AG04450 (cell line): ENCODE measurements at regions of chr16 and their contacts with region 1.

Region 1: DNA sequence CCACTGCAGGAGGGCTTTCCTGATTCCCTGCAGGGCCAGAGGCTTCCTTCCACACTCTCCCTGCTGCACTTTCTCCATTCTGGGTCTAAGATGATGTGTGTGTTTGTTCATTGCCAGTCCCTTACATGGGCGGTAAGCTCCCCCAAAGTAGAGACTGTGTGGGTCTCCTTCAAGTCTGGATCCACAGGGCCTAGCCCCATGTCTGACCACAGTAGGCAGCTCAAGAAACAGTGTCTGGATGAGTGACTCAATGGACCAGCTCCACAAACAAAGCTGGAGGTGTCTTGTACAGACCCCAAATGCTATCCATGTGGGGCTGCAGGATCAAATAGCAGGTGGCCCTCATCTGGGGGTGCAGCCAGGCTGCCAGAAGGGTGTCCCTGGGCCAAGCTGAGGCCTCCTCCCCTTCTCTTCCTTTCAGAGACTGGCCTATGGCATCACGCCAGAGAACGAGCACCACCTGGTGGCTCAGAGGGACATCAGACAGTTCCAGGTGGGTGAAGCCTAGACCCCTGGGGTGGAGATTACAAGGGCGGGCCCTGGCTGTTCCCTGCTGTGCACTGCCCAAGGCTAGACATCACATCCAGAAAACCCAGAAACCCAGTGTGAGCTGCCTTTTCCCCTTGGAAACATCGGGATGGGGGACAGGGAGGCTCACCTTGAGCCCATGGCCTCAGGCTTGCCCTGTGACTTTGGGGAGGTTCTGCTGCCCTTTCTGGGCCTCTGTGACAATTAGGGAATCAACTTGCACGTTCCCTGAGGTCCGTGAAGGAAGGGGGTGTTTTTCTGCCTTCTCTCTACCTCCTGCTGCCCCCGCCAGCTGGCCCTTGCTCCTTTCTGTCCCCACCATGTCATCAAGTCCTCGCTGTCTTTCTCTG is 45.9 kb downstream of the SLC6A2 start:
- DNase-seq: peak; percentile 6
- H3K4me3 ChIP-seq: no peak overlapping the region
- H3K27ac ChIP-seq: no peak overlapping the region
- H3K27me3 ChIP-seq: peaks cover 9% of the 10 kb centered on the region
- CTCF ChIP-seq: peak; percentile 58

Region 2: GRCh38 chr16:55543472-55543871 is 158.2 kb before region 1 on chr16:
- CTCF ChIA-PET with region 1: interaction called, 31 read pairs
- POLR2A ChIA-PET with region 1: no interaction called
- DNase-seq: no peak
- H3K4me3 ChIP-seq: no peak overlapping the region
- H3K27ac ChIP-seq: no peak overlapping the region
- H3K27me3 ChIP-seq: no peaks in the 10 kb centered on the region
- CTCF ChIP-seq: peak; percentile 40

Region 3: GRCh38 chr16:55735120-55735781 is 33.6 kb after region 1 on chr16:
- CTCF ChIA-PET with region 1: no interaction called
- POLR2A ChIA-PET with region 1: no interaction called
- DNase-seq: no peak
- H3K4me3 ChIP-seq: no peak overlapping the region
- H3K27ac ChIP-seq: no peak overlapping the region
- H3K27me3 ChIP-seq: no peaks in the 10 kb centered on the region
- CTCF ChIP-seq: no peak

Region 4: GRCh38 chr16:55868137-55868536 is 166.5 kb after region 1 on chr16:
- CTCF ChIA-PET with region 1: no interaction called
- POLR2A ChIA-PET with region 1: no interaction called
- DNase-seq: no peak
- H3K4me3 ChIP-seq: no peak overlapping the region
- H3K27ac ChIP-seq: no peak overlapping the region
- H3K27me3 ChIP-seq: no peaks in the 10 kb centered on the region
- CTCF ChIP-seq: no peak